Thyroid gland (tissue), 4 donors: ENCODE measurements at regions of chr4 and their contacts with region 1.

Region 1: GRCh38 chr4:26330186-26330787 is 9.5 kb downstream of the RBPJ start:
- DNase-seq: no peak
- H3K4me3 ChIP-seq: no peak overlapping the region
- H3K27ac ChIP-seq: peak overlapping the region in 1 of 3 donors; percentile 36
- H3K4me1 ChIP-seq: peaks cover 21 to 26% of the 10 kb centered on the region in 2 donors
- H3K27me3 ChIP-seq: no peaks in the 10 kb centered on the region
- CTCF ChIP-seq: peak; percentile 43 to 70 (median 62)
- POLR2A ChIP-seq: no peak

Region 2: DNA sequence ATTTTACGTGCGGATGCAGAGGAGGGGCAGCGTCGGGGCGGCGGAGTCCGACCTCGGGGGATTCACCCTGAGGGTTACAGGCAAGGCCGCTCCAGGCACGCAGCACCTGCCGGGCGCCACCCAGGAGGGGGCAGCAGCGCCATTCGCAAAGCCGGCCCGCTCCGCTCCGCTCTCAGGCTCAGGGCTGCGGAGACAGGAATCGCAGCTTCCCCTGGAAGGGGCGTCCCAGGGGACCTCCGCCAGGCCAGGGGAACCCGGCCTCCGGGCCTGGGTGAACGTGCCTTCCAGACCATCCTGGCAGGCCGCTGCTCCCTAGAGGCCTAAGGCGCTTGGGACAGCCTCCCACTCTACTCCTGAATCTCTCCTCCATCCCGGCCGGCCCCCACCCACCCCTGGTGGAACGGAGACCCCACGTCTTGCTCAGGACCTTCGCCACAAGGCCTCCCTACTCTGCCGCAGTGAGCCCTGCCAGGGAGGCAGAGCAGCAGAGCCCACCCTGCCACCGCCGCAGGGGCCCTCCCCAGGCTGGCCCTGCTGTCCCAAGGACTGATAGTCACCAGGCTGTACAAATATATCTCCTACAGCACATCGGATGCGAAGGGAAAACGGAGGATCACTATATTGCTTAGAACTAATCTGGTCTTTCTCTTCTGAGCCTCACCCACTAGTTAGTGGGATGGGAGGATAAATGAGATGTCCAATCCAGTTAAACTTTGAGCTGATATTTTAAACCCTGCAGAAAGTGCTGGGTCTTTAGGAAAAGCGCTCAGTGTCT is 301.3 kb before region 1 on chr4:
- intact Hi-C with region 1: loop called (anchors 10 kb)
- DNase-seq: peak; percentile 56 to 64
- H3K4me3 ChIP-seq: no peak overlapping the region
- H3K27ac ChIP-seq: no peak overlapping the region
- H3K4me1 ChIP-seq: peaks cover 14 to 20% of the 10 kb centered on the region in 2 donors
- H3K27me3 ChIP-seq: no peaks in the 10 kb centered on the region
- CTCF ChIP-seq: peak; percentile 22 to 69 (median 38)
- POLR2A ChIP-seq: no peak